Activated CD4-positive, alpha-beta T cell treated with anti-CD3 and anti-CD28 coated beads for 36 hours (primary cell): ENCODE measurements at regions of chr3 and their contacts with region 1.

Region 1: DNA sequence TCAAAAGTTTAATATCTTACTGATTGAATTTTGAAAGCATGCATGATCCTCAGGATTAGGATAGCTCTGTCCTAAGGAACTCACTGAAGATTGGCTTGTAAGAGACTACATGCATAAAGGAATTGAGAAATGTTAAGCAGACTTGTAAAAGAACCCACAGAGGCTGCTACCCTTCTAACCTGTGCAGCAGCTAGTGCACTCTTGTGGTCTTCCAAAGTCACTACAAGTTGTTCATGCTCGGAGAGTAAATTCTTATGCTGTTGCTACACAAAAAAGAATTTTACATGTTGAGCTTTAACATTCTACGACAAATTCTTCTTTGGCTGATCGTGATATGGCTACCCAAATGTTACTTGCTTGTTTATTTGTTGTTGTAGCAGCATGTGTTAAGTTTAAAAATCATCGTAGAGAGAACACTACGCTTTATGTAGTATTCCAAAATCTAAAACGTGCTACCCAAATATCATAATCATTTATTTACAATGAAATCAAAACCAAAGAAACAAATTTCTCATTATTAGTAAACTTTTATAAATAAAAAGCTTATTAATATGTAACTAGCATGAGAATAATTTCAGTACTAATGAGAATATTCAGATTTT is 55.0 kb downstream of the GOLIM4 start:
- DNase-seq: peak; percentile 8
- ATAC-seq: peak; percentile 70
- H3K4me3 Mint-ChIP-seq: no peak overlapping the region
- H3K27ac Mint-ChIP-seq: no peak overlapping the region
- H3K4me1 Mint-ChIP-seq: no peaks in the 10 kb centered on the region
- H3K27me3 Mint-ChIP-seq: no peaks in the 10 kb centered on the region

Region 2: DNA sequence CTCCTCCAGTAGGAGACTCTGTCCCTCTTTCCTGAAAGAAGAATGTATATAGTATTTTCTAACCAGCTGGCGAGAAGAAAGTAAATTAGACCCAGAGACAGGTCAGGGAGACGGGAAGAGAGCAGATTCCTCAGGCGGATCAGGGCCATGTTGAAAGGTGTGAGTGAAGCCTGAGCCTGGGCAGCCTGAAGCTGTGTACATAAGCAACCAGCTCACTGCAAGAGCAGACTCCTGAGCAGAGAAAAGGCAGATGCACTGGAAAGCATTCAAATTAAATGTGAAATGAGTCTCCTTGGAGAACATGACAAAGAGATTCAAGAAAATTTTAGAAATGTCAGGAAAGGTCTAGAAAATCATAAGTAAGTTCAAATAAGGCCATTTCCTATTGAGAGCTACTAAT is 110.7 kb before region 1 on chr3:
- CTCF ChIA-PET with region 1: interaction called, 3 read pairs
- POLR2A ChIA-PET with region 1: no interaction called
- intact Hi-C with region 1: loop called (anchors 1 kb)
- DNase-seq: no peak
- ATAC-seq: no peak
- H3K4me3 Mint-ChIP-seq: no peak overlapping the region
- H3K27ac Mint-ChIP-seq: no peak overlapping the region
- H3K4me1 Mint-ChIP-seq: no peaks in the 10 kb centered on the region
- H3K27me3 Mint-ChIP-seq: no peaks in the 10 kb centered on the region

Region 3: GRCh38 chr3:167983583-167983982 is 57.1 kb before region 1 on chr3:
- CTCF ChIA-PET with region 1: no interaction called
- POLR2A ChIA-PET with region 1: no interaction called
- intact Hi-C with region 1: loop called in 1 of 2 experiments (anchors 2 kb)
- DNase-seq: no peak
- ATAC-seq: no peak
- H3K4me3 Mint-ChIP-seq: no peak overlapping the region
- H3K27ac Mint-ChIP-seq: no peak overlapping the region
- H3K4me1 Mint-ChIP-seq: no peaks in the 10 kb centered on the region
- H3K27me3 Mint-ChIP-seq: peaks cover 2% of the 10 kb centered on the region

Region 4: GRCh38 chr3:168030577-168030976 is 10.1 kb before region 1 on chr3:
- CTCF ChIA-PET with region 1: interaction called, 22 read pairs
- POLR2A ChIA-PET with region 1: no interaction called
- intact Hi-C with region 1: no loop called
- DNase-seq: no peak
- ATAC-seq: no peak
- H3K4me3 Mint-ChIP-seq: no peak overlapping the region
- H3K27ac Mint-ChIP-seq: no peak overlapping the region
- H3K4me1 Mint-ChIP-seq: peaks cover 2% of the 10 kb centered on the region
- H3K27me3 Mint-ChIP-seq: peaks cover 1% of the 10 kb centered on the region

Region 5: DNA sequence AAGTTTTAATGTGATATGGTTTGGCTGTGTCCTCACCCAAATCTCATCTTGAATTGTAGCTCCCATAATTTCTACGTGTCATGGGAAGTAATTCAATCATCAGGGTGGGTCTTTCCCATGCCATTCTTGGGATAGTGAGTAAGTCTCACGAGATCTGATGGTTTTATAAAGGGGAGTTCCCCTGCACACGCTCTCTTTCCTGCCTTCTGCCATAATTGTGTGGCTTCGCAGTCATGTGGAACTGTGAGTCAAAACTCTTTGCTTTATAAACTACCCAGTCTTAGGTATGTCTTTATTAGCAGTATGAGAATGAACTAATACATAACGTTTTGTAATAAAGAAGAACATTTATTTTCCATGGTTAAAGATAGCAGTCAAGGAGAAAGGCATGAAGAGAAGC is 94.2 kb after region 1 on chr3:
- CTCF ChIA-PET with region 1: no interaction called
- POLR2A ChIA-PET with region 1: no interaction called
- intact Hi-C with region 1: no loop called
- DNase-seq: no peak
- ATAC-seq: no peak
- H3K4me3 Mint-ChIP-seq: no peak overlapping the region
- H3K27ac Mint-ChIP-seq: no peak overlapping the region
- H3K4me1 Mint-ChIP-seq: no peaks in the 10 kb centered on the region
- H3K27me3 Mint-ChIP-seq: no peaks in the 10 kb centered on the region